ENCODE measurements at regions of chr15 and their contacts with region 1.

Region 1: GRCh38 chr15:79380755-79381497 is 51.2 kb upstream of the MINAR1 start:
- DNase-seq: peak; percentile 78
- H3K4me3 Mint-ChIP-seq: no peak overlapping the region
- H3K27ac Mint-ChIP-seq: no peak overlapping the region
- H3K4me1 Mint-ChIP-seq: no peaks in the 10 kb centered on the region
- H3K27me3 Mint-ChIP-seq: no peaks in the 10 kb centered on the region
- CTCF ChIP-seq: peak; percentile 75

Region 2: DNA sequence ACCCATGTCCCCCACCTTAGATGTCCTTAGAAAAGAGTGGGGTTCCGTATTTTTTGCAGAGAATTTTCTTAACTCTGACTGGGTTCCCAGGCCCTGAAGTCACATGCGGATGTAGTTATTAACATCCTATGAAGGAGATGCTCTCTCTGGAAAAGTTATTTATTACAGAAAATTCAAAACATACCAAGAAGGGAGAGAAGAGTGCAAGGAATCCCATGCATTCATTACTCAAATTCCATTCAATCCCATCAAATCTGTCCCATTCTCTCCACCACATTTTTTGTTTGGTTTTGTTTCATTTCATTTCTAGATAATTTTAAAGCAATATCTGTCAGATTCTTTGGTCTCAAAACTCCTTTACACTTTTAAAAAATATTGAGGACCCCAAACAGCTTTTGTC is 132.7 kb before region 1 on chr15:
- CTCF ChIA-PET with region 1: no interaction called
- POLR2A ChIA-PET with region 1: no interaction called
- intact Hi-C with region 1: no loop called
- DNase-seq: no peak
- H3K4me3 Mint-ChIP-seq: no peak overlapping the region
- H3K27ac Mint-ChIP-seq: no peak overlapping the region
- H3K4me1 Mint-ChIP-seq: no peaks in the 10 kb centered on the region
- H3K27me3 Mint-ChIP-seq: peaks cover 71% of the 10 kb centered on the region
- CTCF ChIP-seq: no peak

Region 3: DNA sequence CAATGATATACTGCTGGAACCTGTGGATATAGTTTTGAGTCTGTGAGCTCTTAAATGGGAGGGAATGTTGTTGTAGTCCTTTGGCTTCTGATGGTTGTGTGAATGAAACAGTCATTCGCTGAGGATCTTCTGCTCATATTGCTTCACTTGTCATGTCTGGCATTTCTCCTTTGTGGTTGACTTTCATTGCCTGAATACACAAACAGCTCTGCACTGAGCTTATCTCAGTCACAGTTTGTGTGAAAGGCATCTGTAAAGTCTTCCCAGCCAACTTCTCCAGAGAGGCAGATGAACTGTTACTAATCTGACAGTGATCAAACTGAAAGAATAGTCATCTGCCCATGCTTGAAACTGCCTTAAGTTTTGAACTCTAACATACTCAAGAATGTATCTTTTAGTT is 10.2 kb before region 1 on chr15:
- CTCF ChIA-PET with region 1: interaction called, 25 read pairs
- POLR2A ChIA-PET with region 1: no interaction called
- intact Hi-C with region 1: no loop called
- DNase-seq: no peak
- H3K4me3 Mint-ChIP-seq: no peak overlapping the region
- H3K27ac Mint-ChIP-seq: no peak overlapping the region
- H3K4me1 Mint-ChIP-seq: no peaks in the 10 kb centered on the region
- H3K27me3 Mint-ChIP-seq: no peaks in the 10 kb centered on the region
- CTCF ChIP-seq: no peak

Region 4: GRCh38 chr15:79572691-79573404 is 191.9 kb after region 1 on chr15:
- CTCF ChIA-PET with region 1: interaction called, 18 read pairs
- POLR2A ChIA-PET with region 1: no interaction called
- intact Hi-C with region 1: no loop called
- DNase-seq: no peak
- H3K4me3 Mint-ChIP-seq: no peak overlapping the region
- H3K27ac Mint-ChIP-seq: no peak overlapping the region
- H3K4me1 Mint-ChIP-seq: no peaks in the 10 kb centered on the region
- H3K27me3 Mint-ChIP-seq: peaks cover 14% of the 10 kb centered on the region
- CTCF ChIP-seq: no peak

Region 5: DNA sequence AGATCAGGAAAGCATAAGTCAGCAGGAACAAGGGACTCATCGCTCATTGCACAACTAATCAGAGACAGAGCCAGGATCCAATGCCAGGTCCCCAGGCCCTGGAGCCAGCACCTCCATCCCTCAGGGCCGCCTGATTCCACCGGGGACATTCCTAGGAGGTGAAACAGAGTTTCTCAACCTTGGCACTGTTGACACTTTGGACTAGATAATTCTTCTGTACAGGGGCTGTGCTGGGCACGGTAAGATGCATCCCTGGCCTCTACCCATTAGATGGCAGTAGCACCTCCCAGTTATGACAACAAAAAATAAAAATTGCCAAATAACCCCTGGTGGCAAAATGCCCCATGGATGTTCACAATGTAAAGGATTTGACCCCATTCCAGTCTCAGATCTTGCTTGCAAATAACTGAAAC is 388.1 kb after region 1 on chr15:
- CTCF ChIA-PET with region 1: interaction called, 16 read pairs
- POLR2A ChIA-PET with region 1: no interaction called
- intact Hi-C with region 1: no loop called
- DNase-seq: peak; percentile 85
- H3K4me3 Mint-ChIP-seq: no peak overlapping the region
- H3K27ac Mint-ChIP-seq: no peak overlapping the region
- H3K4me1 Mint-ChIP-seq: peaks cover 12% of the 10 kb centered on the region
- H3K27me3 Mint-ChIP-seq: peaks cover 32% of the 10 kb centered on the region
- CTCF ChIP-seq: peak; percentile 60

Region 6: GRCh38 chr15:79989682-79990081 is 608.8 kb after region 1 on chr15:
- CTCF ChIA-PET with region 1: interaction called, 34 read pairs
- POLR2A ChIA-PET with region 1: no interaction called
- intact Hi-C with region 1: loop called (anchors 2 kb)
- DNase-seq: peak; percentile 61
- H3K4me3 Mint-ChIP-seq: no peak overlapping the region
- H3K27ac Mint-ChIP-seq: no peak overlapping the region
- H3K4me1 Mint-ChIP-seq: peaks cover 4% of the 10 kb centered on the region
- H3K27me3 Mint-ChIP-seq: peaks cover 16% of the 10 kb centered on the region
- CTCF ChIP-seq: no peak

Measured in MCF 10A (cell line).